ENCODE measurements at regions of chr2 and their contacts with region 1.

Region 1: GRCh38 chr2:18096836-18097405 is 218.5 kb downstream of the KCNS3 start:
- DNase-seq: no peak
- H3K4me3 ChIP-seq: no peak overlapping the region
- H3K27ac ChIP-seq: no peak overlapping the region
- H3K4me1 ChIP-seq: no peaks in the 10 kb centered on the region
- H3K27me3 ChIP-seq: no peaks in the 10 kb centered on the region
- CTCF ChIP-seq: no peak
- EP300 ChIP-seq: no peak
- POLR2A ChIP-seq: no peak

Region 2: GRCh38 chr2:18047850-18048249 is 49.1 kb before region 1 on chr2:
- in situ Hi-C with region 1: no loop called
- intact Hi-C with region 1: no loop called
- DNase-seq: no peak
- H3K4me3 ChIP-seq: no peak overlapping the region
- H3K27ac ChIP-seq: no peak overlapping the region
- H3K4me1 ChIP-seq: no peaks in the 10 kb centered on the region
- H3K27me3 ChIP-seq: no peaks in the 10 kb centered on the region
- CTCF ChIP-seq: no peak
- EP300 ChIP-seq: no peak
- POLR2A ChIP-seq: no peak

Region 3: GRCh38 chr2:18062892-18063291 is 34.0 kb before region 1 on chr2:
- in situ Hi-C with region 1: no loop called
- intact Hi-C with region 1: loop called (anchors 1 kb)
- DNase-seq: no peak
- H3K4me3 ChIP-seq: no peak overlapping the region
- H3K27ac ChIP-seq: no peak overlapping the region
- H3K4me1 ChIP-seq: peaks cover 0 to 12% (median 0%) of the 10 kb centered on the region in 4 donors
- H3K27me3 ChIP-seq: no peaks in the 10 kb centered on the region
- CTCF ChIP-seq: no peak
- EP300 ChIP-seq: no peak
- POLR2A ChIP-seq: no peak